HepG2 (cell line): ENCODE measurements at regions of chr6 and their contacts with region 1.

Region 1: DNA sequence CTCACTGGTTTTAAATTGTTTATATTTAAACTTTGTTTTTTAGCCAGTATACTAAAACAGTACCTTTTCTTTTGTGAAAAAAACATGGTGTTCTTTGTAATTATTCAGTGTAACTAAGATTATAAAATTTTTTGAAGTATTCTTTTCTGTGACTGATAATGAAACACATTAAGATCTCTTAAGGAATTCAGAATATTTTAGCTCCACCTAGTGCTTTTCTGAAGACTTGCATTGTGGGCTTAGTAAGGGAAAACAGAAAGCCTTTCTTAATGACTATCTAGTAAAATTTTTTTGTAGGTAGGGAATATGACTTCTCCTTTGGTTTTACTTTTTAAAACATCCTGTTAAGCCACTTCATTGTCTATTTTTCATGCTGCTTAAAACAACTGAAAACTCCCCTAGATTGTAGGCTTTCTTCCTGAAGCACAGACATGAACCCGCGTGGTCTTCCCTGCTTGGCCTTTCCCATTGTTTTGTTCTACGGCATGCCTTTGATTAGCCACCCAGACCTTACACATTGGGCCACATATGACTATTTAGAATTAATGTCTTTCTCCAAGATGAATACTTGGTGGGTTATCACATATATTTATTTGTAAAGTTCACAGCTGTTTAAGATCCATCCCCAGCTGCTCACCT is 72.1 kb downstream of the AFDN start:
- DNase-seq: peak; percentile 43
- ATAC-seq: no peak
- H3K4me3 ChIP-seq: no peak overlapping the region
- H3K27ac ChIP-seq: no peak overlapping the region
- H3K4me1 ChIP-seq: peaks cover 8% of the 10 kb centered on the region; the same call in 1 of the 2 replicates
- H3K27me3 ChIP-seq: no peaks in the 10 kb centered on the region
- CTCF ChIP-seq: peak; percentile 56
- EP300 ChIP-seq: no peak
- POLR2A ChIP-seq: no peak
- RAD21 ChIP-seq: peak; percentile 80

Region 2: GRCh38 chr6:167221400-167222201 is 677.2 kb before region 1 on chr6:
- CTCF ChIA-PET with region 1: no interaction called
- POLR2A ChIA-PET with region 1: no interaction called
- in situ Hi-C with region 1: no loop called
- intact Hi-C with region 1: no loop called
- DNase-seq: no peak
- ATAC-seq: no peak
- H3K4me3 ChIP-seq: no peak overlapping the region
- H3K27ac ChIP-seq: peak overlapping the region; percentile 82
- H3K4me1 ChIP-seq: peaks cover 95% of the 10 kb centered on the region
- H3K27me3 ChIP-seq: no peaks in the 10 kb centered on the region
- CTCF ChIP-seq: no peak
- EP300 ChIP-seq: no peak
- POLR2A ChIP-seq: no peak
- RAD21 ChIP-seq: no peak

Region 3: GRCh38 chr6:167485186-167485978 is 413.4 kb before region 1 on chr6:
- CTCF ChIA-PET with region 1: interaction called, 13 read pairs
- POLR2A ChIA-PET with region 1: no interaction called
- in situ Hi-C with region 1: no loop called
- intact Hi-C with region 1: loop called (anchors 1 kb)
- DNase-seq: peak; percentile 39
- ATAC-seq: peak; percentile 79
- H3K4me3 ChIP-seq: no peak overlapping the region
- H3K27ac ChIP-seq: no peak overlapping the region
- H3K4me1 ChIP-seq: peaks cover 12% of the 10 kb centered on the region
- H3K27me3 ChIP-seq: peaks cover 2 to 11% of the 10 kb centered on the region in 2 experiments; a peak in 4 of 5 replicates
- CTCF ChIP-seq: peak; percentile 70
- EP300 ChIP-seq: no peak
- POLR2A ChIP-seq: no peak
- RAD21 ChIP-seq: peak; percentile 66

Region 4: DNA sequence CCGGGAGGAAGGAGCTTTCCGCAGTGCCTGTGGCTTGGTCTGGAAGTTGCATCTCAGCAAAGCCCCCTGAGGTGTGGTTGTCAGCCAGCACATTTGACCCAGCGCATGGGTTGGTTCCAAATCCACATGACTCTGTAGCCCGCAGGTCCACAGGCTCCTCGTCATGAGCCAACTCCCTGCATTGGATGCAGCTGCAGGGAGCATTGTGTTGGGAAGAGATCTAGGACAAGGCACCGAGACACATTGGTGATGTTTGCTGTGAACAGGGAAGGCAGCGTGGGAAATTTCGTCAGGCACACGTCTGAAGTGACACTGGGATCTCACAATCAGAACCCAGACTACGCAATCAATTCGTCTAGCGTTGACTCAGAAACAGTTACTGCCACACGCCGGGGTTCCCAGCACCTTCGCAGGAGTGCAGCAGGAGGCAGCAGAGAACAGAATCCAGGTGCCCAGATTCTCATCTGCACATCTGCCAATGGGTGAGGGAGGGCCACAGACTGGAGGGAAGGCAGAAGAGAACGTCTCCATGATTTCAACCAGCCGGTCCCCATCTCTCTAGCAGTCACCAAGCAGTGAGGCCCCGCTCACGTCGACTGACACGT is 396.9 kb before region 1 on chr6:
- CTCF ChIA-PET with region 1: interaction called, 7 read pairs
- POLR2A ChIA-PET with region 1: no interaction called
- in situ Hi-C with region 1: no loop called
- intact Hi-C with region 1: loop called (anchors 5 kb)
- DNase-seq: peak; percentile 77
- ATAC-seq: peak; percentile 74
- H3K4me3 ChIP-seq: no peak overlapping the region
- H3K27ac ChIP-seq: no peak overlapping the region
- H3K4me1 ChIP-seq: peaks cover 89% of the 10 kb centered on the region
- H3K27me3 ChIP-seq: no peaks in the 10 kb centered on the region
- CTCF ChIP-seq: peak; percentile 93
- EP300 ChIP-seq: no peak
- POLR2A ChIP-seq: no peak
- RAD21 ChIP-seq: peak; percentile 98